Vagina (tissue), 2 donors: ENCODE measurements at regions of chr1 and their contacts with region 1.

Region 1: DNA sequence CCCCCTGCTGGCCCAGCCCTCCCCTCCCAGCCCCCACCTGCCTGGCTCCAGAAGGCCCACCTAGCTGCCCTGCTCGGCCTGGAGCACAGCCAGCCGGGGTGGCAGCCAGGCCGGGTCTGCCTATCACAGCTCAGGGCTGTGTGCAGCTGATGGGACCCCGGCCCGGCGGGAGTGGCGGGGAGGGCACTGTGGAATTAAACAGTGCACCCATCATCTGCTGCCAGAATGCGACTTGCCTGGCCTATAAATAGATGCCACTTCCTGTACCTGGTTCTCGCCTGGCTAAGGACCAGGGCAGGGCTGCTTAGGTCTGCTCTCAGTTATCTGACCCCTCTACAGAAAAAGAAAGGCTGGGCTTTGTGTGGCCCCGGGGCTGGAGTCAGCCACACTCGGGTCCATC is 98.2 kb upstream of the VAMP3 start:
- DNase-seq: no peak
- H3K4me3 ChIP-seq: no peak overlapping the region
- H3K27ac ChIP-seq: no peak overlapping the region
- H3K4me1 ChIP-seq: peaks cover 11% of the 10 kb centered on the region
- H3K27me3 ChIP-seq: no peaks in the 10 kb centered on the region
- CTCF ChIP-seq: no peak
- POLR2A ChIP-seq: no peak

Region 2: DNA sequence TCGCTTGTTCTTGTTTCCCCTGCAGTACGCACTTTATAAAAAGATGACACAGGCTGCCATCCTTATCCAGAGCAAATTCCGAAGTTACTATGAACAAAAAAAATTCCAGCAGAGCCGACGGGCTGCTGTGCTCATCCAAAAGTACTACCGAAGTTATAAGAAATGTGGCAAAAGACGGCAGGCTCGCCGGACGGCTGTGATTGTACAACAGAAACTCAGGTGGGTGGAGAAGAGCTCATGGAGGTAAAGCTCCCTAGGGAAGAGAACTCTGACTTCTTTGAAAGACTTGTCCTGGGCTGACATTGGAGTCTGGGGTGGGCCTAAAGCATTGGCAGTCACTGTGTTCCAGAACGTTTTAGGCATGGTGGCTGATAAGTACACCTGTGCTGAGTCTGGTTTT is 78.3 kb after region 1 on chr1:
- intact Hi-C with region 1: loop called (anchors 2 kb)
- DNase-seq: no peak
- H3K4me3 ChIP-seq: no peak overlapping the region
- H3K27ac ChIP-seq: no peak overlapping the region
- H3K4me1 ChIP-seq: peaks cover 4% of the 10 kb centered on the region
- H3K27me3 ChIP-seq: no peaks in the 10 kb centered on the region
- CTCF ChIP-seq: no peak
- POLR2A ChIP-seq: no peak